Astrocyte of the cerebellum (primary cell): ENCODE measurements at regions of chr5 and their contacts with region 1.

Region 1: GRCh38 chr5:145697251-145697990 is 137.7 kb downstream of the PRELID2 start:
- DNase-seq: peak; percentile 2
- H3K4me3 ChIP-seq: no peak overlapping the region
- CTCF ChIP-seq: peak; percentile 54

Region 2: GRCh38 chr5:145598184-145598583 is 99.2 kb before region 1 on chr5:
- in situ Hi-C with region 1: no loop called
- DNase-seq: no peak
- H3K4me3 ChIP-seq: no peak overlapping the region
- CTCF ChIP-seq: no peak

Region 3: GRCh38 chr5:145752947-145753346 is 55.5 kb after region 1 on chr5:
- in situ Hi-C with region 1: loop called (anchors 5 kb)
- DNase-seq: peak; percentile 55
- H3K4me3 ChIP-seq: no peak overlapping the region
- CTCF ChIP-seq: no peak